ENCODE measurements at regions of chr1 and their contacts with region 1.

Region 1: GRCh38 chr1:53992085-53992874 is 25.7 kb downstream of the LDLRAD1 start:
- DNase-seq: peak; percentile 63
- ATAC-seq: peak; percentile 98
- H3K4me3 Mint-ChIP-seq: no peak overlapping the region
- H3K27ac Mint-ChIP-seq: no peak overlapping the region
- H3K4me1 Mint-ChIP-seq: no peaks in the 10 kb centered on the region
- H3K27me3 Mint-ChIP-seq: 0 out of 2 replicates have a peak, but pooled peaks cover under 1% of the 10 kb centered on the region
- CTCF ChIP-seq: peak; percentile 42

Region 2: GRCh38 chr1:53945433-53946251 is 46.6 kb before region 1 on chr1 and contains the start of gene IFT25:
- CTCF ChIA-PET with region 1: interaction called, 11 read pairs
- POLR2A ChIA-PET with region 1: no interaction called
- DNase-seq: peak; percentile 97
- ATAC-seq: peak; percentile 83
- H3K4me3 Mint-ChIP-seq: peak within 1 kb of the TSS; percentile 87
- H3K27ac Mint-ChIP-seq: peak within 1 kb of the TSS; percentile 68; the same call in 1 of the 2 replicates
- H3K4me1 Mint-ChIP-seq: peaks cover 55% of the 10 kb centered on the region
- H3K27me3 Mint-ChIP-seq: no peaks in the 10 kb centered on the region
- CTCF ChIP-seq: no peak
- total RNA-seq, gene IFT25: 22.6 to 27.9 TPM (median 26.3 TPM) in 3 replicates

Region 3: DNA sequence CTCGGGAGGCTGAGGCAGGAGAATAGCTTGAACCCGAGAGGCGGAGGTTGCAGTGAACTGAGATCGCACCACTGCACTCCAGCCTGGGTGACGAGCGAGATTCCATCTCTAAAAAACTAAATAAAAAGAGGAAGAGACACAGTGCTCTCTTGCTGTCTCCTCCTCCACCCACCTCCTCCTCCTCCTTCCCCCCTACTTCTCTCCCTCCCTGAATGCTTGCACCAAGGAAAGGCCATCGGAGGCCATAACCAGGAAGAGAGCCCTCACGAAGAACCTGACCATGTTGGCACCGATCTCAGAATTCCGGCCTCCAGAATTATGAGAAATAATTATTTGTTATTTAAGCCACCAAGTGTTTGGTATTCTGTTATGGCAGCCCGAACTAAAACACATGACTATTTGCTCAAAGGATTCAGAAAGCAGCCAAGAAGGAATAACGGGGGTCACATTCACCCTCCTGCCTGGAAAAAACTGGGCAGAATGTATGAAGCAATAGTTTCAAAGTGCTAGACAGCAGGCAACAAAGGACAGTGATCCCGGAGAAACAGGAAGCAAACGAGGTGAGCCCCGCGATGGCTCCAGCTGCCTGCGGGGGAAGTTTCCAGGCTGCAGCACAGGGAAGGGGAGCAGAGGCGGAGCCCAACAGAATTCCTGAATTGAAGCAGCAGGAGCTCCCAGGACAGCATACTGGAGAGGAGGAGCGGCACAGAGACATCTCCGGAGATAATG is 10.1 kb before region 1 on chr1:
- CTCF ChIA-PET with region 1: interaction called, 40 read pairs
- POLR2A ChIA-PET with region 1: no interaction called
- DNase-seq: peak; percentile 70
- ATAC-seq: peak; percentile 96
- H3K4me3 Mint-ChIP-seq: peak overlapping the region; percentile 65
- H3K27ac Mint-ChIP-seq: peak overlapping the region; percentile 78
- H3K4me1 Mint-ChIP-seq: peaks cover 39% of the 10 kb centered on the region
- H3K27me3 Mint-ChIP-seq: peaks cover 6% of the 10 kb centered on the region
- CTCF ChIP-seq: no peak

Region 4: DNA sequence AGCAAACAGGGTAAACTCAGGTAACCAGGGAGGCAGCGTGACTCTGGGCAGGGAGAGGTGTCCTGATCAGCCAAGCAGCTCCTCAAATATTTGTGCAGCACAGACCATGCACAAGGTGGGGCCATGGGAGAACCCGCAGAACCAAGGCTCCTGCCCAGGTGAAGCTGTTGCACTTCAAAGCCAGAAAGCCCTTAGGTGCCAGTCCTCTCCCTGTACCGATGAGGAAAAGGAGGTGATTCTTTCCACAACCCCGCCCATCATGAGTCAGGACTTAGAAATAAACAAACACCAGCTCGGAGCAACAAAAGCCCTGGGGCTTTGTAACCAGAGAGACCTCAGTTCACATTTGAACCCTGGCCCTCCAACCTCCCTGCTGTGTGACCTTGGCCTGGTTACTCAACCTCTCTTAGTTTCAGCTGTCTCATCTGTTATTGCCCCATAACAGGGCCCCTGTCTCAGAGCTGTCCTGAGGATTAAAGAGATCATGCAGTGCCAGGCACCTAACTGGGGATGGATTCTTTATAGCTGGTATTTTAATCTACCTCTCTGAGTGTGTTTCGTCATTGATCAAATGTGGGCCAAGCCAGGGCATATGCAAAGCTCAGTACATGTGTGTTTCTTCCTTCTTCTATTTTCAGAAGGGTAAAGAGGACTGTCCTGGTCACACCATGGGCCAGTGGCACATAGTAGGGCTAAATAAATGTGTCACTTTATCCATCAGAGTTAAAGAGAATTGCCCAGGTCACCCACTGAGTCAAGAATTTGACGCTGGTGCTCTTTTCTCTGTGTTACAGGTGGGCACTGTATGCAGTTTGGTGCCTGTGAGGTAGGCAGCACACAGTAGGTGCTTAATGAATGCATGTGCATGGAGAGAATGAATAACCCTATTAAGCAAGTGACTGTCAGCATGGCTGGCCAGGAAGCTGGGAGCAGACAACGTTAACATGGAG is 24.3 kb after region 1 on chr1:
- CTCF ChIA-PET with region 1: interaction called, 19 read pairs
- POLR2A ChIA-PET with region 1: no interaction called
- DNase-seq: no peak
- ATAC-seq: peak; percentile 40
- H3K4me3 Mint-ChIP-seq: no peak overlapping the region
- H3K27ac Mint-ChIP-seq: no peak overlapping the region; the same call in 1 of the 2 replicates
- H3K4me1 Mint-ChIP-seq: peaks cover 9% of the 10 kb centered on the region
- H3K27me3 Mint-ChIP-seq: 0 out of 2 replicates have a peak, but pooled peaks cover 3% of the 10 kb centered on the region
- CTCF ChIP-seq: no peak

Region 5: DNA sequence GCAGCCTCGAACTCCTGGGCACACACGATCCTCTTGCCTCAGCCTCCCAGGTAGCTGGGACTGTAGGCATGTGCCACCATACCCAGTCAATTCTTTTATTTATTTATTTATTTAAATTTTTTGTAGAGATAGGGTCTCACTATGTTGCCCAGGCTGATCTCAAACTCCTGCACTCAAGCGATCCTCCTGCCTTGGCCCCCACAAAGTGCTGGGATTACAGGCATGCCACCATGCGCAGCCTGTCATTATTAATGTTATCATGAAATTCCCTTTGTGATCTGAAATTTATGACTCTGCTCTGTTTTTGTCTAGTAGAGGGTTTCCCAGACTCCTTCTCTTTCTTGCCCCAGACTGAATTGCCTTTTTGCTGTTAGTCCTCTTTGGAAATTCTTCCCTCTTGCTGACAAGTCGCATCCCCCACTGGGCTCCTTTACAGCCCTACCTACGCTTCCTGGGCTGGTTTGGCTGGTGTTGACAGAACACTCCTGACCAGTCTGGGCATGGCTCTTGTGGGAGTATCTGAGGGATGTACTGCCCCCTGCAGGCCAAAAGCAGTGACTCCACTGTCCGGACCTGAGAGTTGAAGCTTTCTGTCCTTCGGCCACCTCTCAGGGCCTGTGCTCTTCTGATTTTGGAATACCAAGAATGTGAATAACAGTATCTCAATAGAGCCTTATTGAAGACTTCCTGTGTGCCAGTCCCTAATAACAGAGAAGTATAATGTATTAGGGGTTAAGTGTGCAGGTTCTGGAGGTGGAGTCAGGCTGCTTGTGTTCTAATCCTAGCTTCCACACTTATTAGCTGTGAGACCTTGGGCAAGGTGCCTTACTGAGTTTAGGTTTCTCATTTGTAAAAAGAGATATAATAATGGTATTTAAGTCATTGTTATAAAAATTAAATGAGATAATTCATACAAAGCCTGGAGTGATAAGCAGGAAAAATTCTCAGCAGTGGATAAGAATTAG is 89.3 kb after region 1 on chr1:
- CTCF ChIA-PET with region 1: interaction called, 50 read pairs
- POLR2A ChIA-PET with region 1: interaction called, 3 read pairs
- DNase-seq: peak; percentile 93
- ATAC-seq: peak; percentile 100
- H3K4me3 Mint-ChIP-seq: no peak overlapping the region
- H3K27ac Mint-ChIP-seq: 0 out of 2 replicates have a peak overlapping the region, but pooled peaks have one; percentile 4
- H3K4me1 Mint-ChIP-seq: peaks cover 8% of the 10 kb centered on the region
- H3K27me3 Mint-ChIP-seq: no peaks in the 10 kb centered on the region; the same call in 1 of the 2 replicates
- CTCF ChIP-seq: peak; percentile 82

Measured in WTC11 (cell line).